Common myeloid progenitor, CD34-positive (primary cell): ENCODE measurements at regions of chr10 and their contacts with region 1.

Region 1: DNA sequence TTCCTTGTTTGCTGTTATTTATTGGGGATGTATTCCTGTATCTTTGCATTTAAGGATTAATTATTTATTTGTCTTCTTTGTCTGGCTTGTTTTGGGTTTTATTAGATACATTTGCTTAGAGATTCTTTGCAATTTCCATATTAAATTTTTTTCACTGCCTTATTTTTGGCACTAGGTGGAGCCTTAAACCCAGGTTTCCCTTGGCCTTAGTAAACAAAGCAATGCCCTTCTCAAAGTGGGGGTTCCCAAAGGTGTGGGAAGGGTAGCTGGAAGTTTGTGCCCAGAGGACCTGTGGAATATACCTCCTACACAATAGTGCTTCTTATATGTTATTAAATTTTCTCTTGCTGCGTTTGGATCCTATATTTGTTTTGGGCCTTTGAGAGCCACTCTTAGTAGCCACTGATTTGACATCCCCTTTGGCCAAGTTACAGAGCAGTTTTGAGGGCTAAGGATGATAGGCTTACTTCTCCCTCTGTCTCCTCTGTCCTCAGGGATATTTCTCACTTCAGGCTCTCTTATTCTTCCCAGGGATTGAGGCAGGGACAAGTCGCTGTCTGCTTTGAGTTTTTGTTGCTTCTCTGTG is 162.3 kb downstream of the ITGB1 start:
- DNase-seq: peak; percentile 25 to 53 (median 40)
- H3K4me3 ChIP-seq: no peak overlapping the region
- H3K27ac ChIP-seq: no peak overlapping the region
- H3K4me1 ChIP-seq: no peaks in the 10 kb centered on the region
- H3K27me3 ChIP-seq: peaks cover 0 to 3% (median 0%) of the 10 kb centered on the region in 5 experiments

Region 2: DNA sequence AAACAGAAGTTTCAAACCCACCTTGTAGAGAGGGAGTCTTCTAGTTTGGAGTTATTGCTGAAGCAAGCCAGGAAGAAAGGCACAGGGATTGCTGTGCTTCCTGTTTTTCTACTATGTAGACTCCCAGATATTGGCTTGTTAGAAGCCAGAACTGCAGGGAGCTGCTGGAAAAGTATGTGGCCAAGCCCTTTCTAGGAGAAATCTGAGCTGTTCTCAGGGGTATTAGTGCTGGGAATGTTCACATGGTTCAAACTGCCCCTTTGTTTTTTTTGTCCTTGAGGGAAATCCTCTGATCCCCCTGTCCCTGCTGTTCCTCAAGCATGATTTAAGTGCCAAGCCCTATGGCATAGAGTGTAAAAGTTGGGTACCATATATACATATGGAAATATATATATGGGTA is 165.8 kb before region 1 on chr10:
- CTCF ChIA-PET with region 1: no interaction called
- POLR2A ChIA-PET with region 1: no interaction called
- DNase-seq: no peak
- H3K4me3 ChIP-seq: no peak overlapping the region
- H3K27ac ChIP-seq: no peak overlapping the region
- H3K4me1 ChIP-seq: no peaks in the 10 kb centered on the region
- H3K27me3 ChIP-seq: no peaks in the 10 kb centered on the region

Region 3: GRCh38 chr10:32893431-32893830 is 97.7 kb after region 1 on chr10:
- CTCF ChIA-PET with region 1: no interaction called
- POLR2A ChIA-PET with region 1: no interaction called
- DNase-seq: no peak
- H3K4me3 ChIP-seq: no peak overlapping the region
- H3K27ac ChIP-seq: no peak overlapping the region
- H3K4me1 ChIP-seq: peaks cover 0 to 7% (median 0%) of the 10 kb centered on the region in 4 experiments
- H3K27me3 ChIP-seq: no peaks in the 10 kb centered on the region

Region 4: GRCh38 chr10:33008499-33009243 is 213.0 kb after region 1 on chr10:
- CTCF ChIA-PET with region 1: interaction called, 15 read pairs
- POLR2A ChIA-PET with region 1: no interaction called
- DNase-seq: peak; percentile 72 to 83 (median 81)
- H3K4me3 ChIP-seq: peak overlapping the region in 5 of 7 experiments; percentile 21 to 65 (median 51)
- H3K27ac ChIP-seq: no peak overlapping the region
- H3K4me1 ChIP-seq: peaks cover 5 to 19% (median 17%) of the 10 kb centered on the region in 4 experiments
- H3K27me3 ChIP-seq: peaks cover 0 to 5% (median 0%) of the 10 kb centered on the region in 5 experiments